GM12878 (cell line): ENCODE measurements at regions of chr14 and their contacts with region 1.

Region 1: GRCh38 chr14:75307700-75308379 is 29.2 kb downstream of the FOS start:
- DNase-seq: no peak
- ATAC-seq: peak; percentile 87
- H3K4me3 ChIP-seq: no peak overlapping the region
- H3K27ac ChIP-seq: no peak overlapping the region
- H3K4me1 ChIP-seq: peaks cover 8% of the 10 kb centered on the region
- H3K27me3 ChIP-seq: no peaks in the 10 kb centered on the region
- CTCF ChIP-seq: peak; percentile 87 to 97 (median 88); a peak in 5 of 6 replicates
- EP300 ChIP-seq: no peak
- POLR2A ChIP-seq: no peak
- RAD21 ChIP-seq: peak; percentile 90

Region 2: GRCh38 chr14:74401504-74402241 is 906.2 kb before region 1 on chr14:
- CTCF ChIA-PET with region 1: no interaction called
- POLR2A ChIA-PET with region 1: no interaction called
- RAD21 ChIA-PET with region 1: no interaction called
- SMC1A ChIA-PET with region 1: no interaction called
- in situ Hi-C with region 1: no loop called
- intact Hi-C with region 1: no loop called
- DNase-seq: peak; percentile 45
- ATAC-seq: peak; percentile 92
- H3K4me3 ChIP-seq: peak overlapping the region; percentile 61; the same call in 1 of the 2 replicates
- H3K27ac ChIP-seq: peak overlapping the region; percentile 69
- H3K4me1 ChIP-seq: peaks cover 26% of the 10 kb centered on the region
- H3K27me3 ChIP-seq: peaks cover 0 to 3% of the 10 kb centered on the region in 2 experiments; a peak in 3 of 4 replicates
- CTCF ChIP-seq: no peak
- EP300 ChIP-seq: no peak
- POLR2A ChIP-seq: peak; percentile 48
- RAD21 ChIP-seq: no peak

Region 3: GRCh38 chr14:74860906-74861733 is 446.7 kb before region 1 on chr14:
- CTCF ChIA-PET with region 1: interaction called, 19 read pairs
- POLR2A ChIA-PET with region 1: no interaction called
- RAD21 ChIA-PET with region 1: no interaction called
- SMC1A ChIA-PET with region 1: interaction called, 8 read pairs
- in situ Hi-C with region 1: no loop called
- intact Hi-C with region 1: no loop called
- DNase-seq: no peak
- ATAC-seq: peak; percentile 97
- H3K4me3 ChIP-seq: no peak overlapping the region
- H3K27ac ChIP-seq: no peak overlapping the region
- H3K4me1 ChIP-seq: no peaks in the 10 kb centered on the region
- H3K27me3 ChIP-seq: no peaks in the 10 kb centered on the region
- CTCF ChIP-seq: peak; percentile 82 to 94 (median 88)
- EP300 ChIP-seq: no peak
- POLR2A ChIP-seq: no peak
- RAD21 ChIP-seq: peak; percentile 93

Region 4: GRCh38 chr14:75126679-75127473 is 181.0 kb before region 1 on chr14 and contains the start of gene NEK9:
- CTCF ChIA-PET with region 1: interaction called, 279 read pairs
- POLR2A ChIA-PET with region 1: interaction called, 3 read pairs
- RAD21 ChIA-PET with region 1: interaction called, 37 read pairs
- SMC1A ChIA-PET with region 1: interaction called, 154 read pairs
- in situ Hi-C with region 1: loop called (anchors 5 kb)
- intact Hi-C with region 1: loop called (anchors 1 kb)
- DNase-seq: peak; percentile 45
- ATAC-seq: peak; percentile 98
- H3K4me3 ChIP-seq: peak within 1 kb of the TSS; percentile 76
- H3K27ac ChIP-seq: peak within 1 kb of the TSS; percentile 88
- H3K4me1 ChIP-seq: peaks cover 11% of the 10 kb centered on the region
- H3K27me3 ChIP-seq: no peaks in the 10 kb centered on the region
- CTCF ChIP-seq: no peak
- EP300 ChIP-seq: no peak
- POLR2A ChIP-seq: peak; percentile 98
- RAD21 ChIP-seq: no peak
- polyA plus RNA-seq, gene NEK9: 6.0 to 15.7 TPM

Region 5: GRCh38 chr14:75223664-75224154 is 84.1 kb before region 1 on chr14:
- CTCF ChIA-PET with region 1: no interaction called
- POLR2A ChIA-PET with region 1: no interaction called
- RAD21 ChIA-PET with region 1: no interaction called
- SMC1A ChIA-PET with region 1: no interaction called
- in situ Hi-C with region 1: no loop called
- intact Hi-C with region 1: no loop called
- DNase-seq: peak; percentile 75
- ATAC-seq: peak; percentile 73
- H3K4me3 ChIP-seq: no peak overlapping the region
- H3K27ac ChIP-seq: no peak overlapping the region; the same call in none of the 2 replicates
- H3K4me1 ChIP-seq: peaks cover 38% of the 10 kb centered on the region
- H3K27me3 ChIP-seq: no peaks in the 10 kb centered on the region; a peak in 1 of 4 replicates
- CTCF ChIP-seq: no peak
- EP300 ChIP-seq: peak in 1 of 2 experiments; percentile 72; a peak in 2 of 4 replicates
- POLR2A ChIP-seq: no peak
- RAD21 ChIP-seq: no peak

Region 6: DNA sequence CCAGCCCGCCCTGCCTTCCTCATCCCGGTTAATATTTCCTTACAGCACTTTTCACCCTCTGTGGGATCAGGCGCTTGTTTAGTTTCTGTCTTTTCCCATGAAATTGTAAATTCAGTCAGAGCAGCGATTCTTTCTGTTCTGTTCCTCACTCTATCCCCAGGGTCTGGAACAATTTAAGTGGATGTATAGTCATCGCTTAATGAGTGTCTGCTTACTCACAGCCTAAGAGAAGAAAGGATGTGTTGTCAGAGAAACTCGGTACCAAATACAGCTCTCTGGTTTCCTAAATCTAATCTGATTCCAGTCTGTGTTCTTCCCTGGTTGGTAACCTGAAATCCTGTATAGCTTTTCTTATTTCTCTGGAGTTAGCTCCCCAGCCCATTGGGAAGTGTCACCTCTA is 15.7 kb after region 1 on chr14:
- CTCF ChIA-PET with region 1: interaction called, 6 read pairs
- POLR2A ChIA-PET with region 1: no interaction called
- RAD21 ChIA-PET with region 1: no interaction called
- SMC1A ChIA-PET with region 1: interaction called, 11 read pairs
- in situ Hi-C with region 1: no loop called
- intact Hi-C with region 1: no loop called
- DNase-seq: no peak
- ATAC-seq: no peak
- H3K4me3 ChIP-seq: no peak overlapping the region
- H3K27ac ChIP-seq: no peak overlapping the region
- H3K4me1 ChIP-seq: no peaks in the 10 kb centered on the region
- H3K27me3 ChIP-seq: no peaks in the 10 kb centered on the region; a peak in 1 of 4 replicates
- CTCF ChIP-seq: no peak
- EP300 ChIP-seq: no peak
- POLR2A ChIP-seq: no peak
- RAD21 ChIP-seq: no peak

Region 7: GRCh38 chr14:75440733-75441477 is 133.1 kb after region 1 on chr14:
- CTCF ChIA-PET with region 1: interaction called, 19 read pairs
- POLR2A ChIA-PET with region 1: no interaction called
- RAD21 ChIA-PET with region 1: interaction called, 7 read pairs
- SMC1A ChIA-PET with region 1: interaction called, 15 read pairs
- in situ Hi-C with region 1: no loop called
- intact Hi-C with region 1: no loop called
- DNase-seq: no peak
- ATAC-seq: no peak; the same call in 2 of the 3 replicates
- H3K4me3 ChIP-seq: no peak overlapping the region
- H3K27ac ChIP-seq: peak overlapping the region; percentile 24; the same call in 1 of the 2 replicates
- H3K4me1 ChIP-seq: peaks cover 39% of the 10 kb centered on the region
- H3K27me3 ChIP-seq: no peaks in the 10 kb centered on the region
- CTCF ChIP-seq: no peak
- EP300 ChIP-seq: no peak
- POLR2A ChIP-seq: no peak
- RAD21 ChIP-seq: no peak

Region 8: GRCh38 chr14:75522224-75522982 is 214.6 kb after region 1 on chr14 and contains the start of gene BATF:
- CTCF ChIA-PET with region 1: interaction called, 12 read pairs
- POLR2A ChIA-PET with region 1: no interaction called
- RAD21 ChIA-PET with region 1: interaction called, 5 read pairs
- SMC1A ChIA-PET with region 1: interaction called, 10 read pairs
- in situ Hi-C with region 1: no loop called
- intact Hi-C with region 1: no loop called
- DNase-seq: no peak
- ATAC-seq: peak; percentile 58
- H3K4me3 ChIP-seq: peak within 1 kb of the TSS; percentile 95
- H3K27ac ChIP-seq: peak within 1 kb of the TSS; percentile 93
- H3K4me1 ChIP-seq: peaks cover 29% of the 10 kb centered on the region
- H3K27me3 ChIP-seq: no peaks in the 10 kb centered on the region
- CTCF ChIP-seq: no peak
- EP300 ChIP-seq: peak; percentile 22 to 42; a peak in 1 of 4 replicates
- POLR2A ChIP-seq: peak; percentile 98
- RAD21 ChIP-seq: peak; percentile 25; the same call in 1 of the 2 replicates
- polyA plus RNA-seq, gene BATF: 10.0 to 30.9 TPM